ENCODE measurements at regions of chr14 and their contacts with region 1.

Region 1: GRCh38 chr14:90399541-90400444 is 3.0 kb downstream of the CALM1 start:
- DNase-seq: peak; percentile 91
- H3K4me3 Mint-ChIP-seq: peak overlapping the region; percentile 29
- H3K27ac Mint-ChIP-seq: no peak overlapping the region
- H3K4me1 Mint-ChIP-seq: peaks cover 10% of the 10 kb centered on the region
- H3K27me3 Mint-ChIP-seq: no peaks in the 10 kb centered on the region
- CTCF ChIP-seq: peak; percentile 99

Region 2: GRCh38 chr14:89954070-89955028 is 445.4 kb before region 1 on chr14 and contains the start of gene EFCAB11:
- CTCF ChIA-PET with region 1: no interaction called
- POLR2A ChIA-PET with region 1: no interaction called
- intact Hi-C with region 1: loop called (anchors 10 kb)
- DNase-seq: peak; percentile 99
- H3K4me3 Mint-ChIP-seq: peak within 1 kb of the TSS; percentile 88
- H3K27ac Mint-ChIP-seq: peak within 1 kb of the TSS; percentile 65
- H3K4me1 Mint-ChIP-seq: peaks cover 19% of the 10 kb centered on the region
- H3K27me3 Mint-ChIP-seq: no peaks in the 10 kb centered on the region
- CTCF ChIP-seq: peak; percentile 30
- total RNA-seq, gene EFCAB11: 10.6 and 11.1 TPM in 2 replicates

Region 3: GRCh38 chr14:90301668-90302090 is 98.1 kb before region 1 on chr14:
- CTCF ChIA-PET with region 1: interaction called, 5 read pairs
- POLR2A ChIA-PET with region 1: interaction called, 10 read pairs
- intact Hi-C with region 1: loop called (anchors 1 kb)
- DNase-seq: peak; percentile 41
- H3K4me3 Mint-ChIP-seq: no peak overlapping the region
- H3K27ac Mint-ChIP-seq: peak overlapping the region; percentile 63
- H3K4me1 Mint-ChIP-seq: no peaks in the 10 kb centered on the region
- H3K27me3 Mint-ChIP-seq: no peaks in the 10 kb centered on the region
- CTCF ChIP-seq: peak; percentile 23

Region 4: DNA sequence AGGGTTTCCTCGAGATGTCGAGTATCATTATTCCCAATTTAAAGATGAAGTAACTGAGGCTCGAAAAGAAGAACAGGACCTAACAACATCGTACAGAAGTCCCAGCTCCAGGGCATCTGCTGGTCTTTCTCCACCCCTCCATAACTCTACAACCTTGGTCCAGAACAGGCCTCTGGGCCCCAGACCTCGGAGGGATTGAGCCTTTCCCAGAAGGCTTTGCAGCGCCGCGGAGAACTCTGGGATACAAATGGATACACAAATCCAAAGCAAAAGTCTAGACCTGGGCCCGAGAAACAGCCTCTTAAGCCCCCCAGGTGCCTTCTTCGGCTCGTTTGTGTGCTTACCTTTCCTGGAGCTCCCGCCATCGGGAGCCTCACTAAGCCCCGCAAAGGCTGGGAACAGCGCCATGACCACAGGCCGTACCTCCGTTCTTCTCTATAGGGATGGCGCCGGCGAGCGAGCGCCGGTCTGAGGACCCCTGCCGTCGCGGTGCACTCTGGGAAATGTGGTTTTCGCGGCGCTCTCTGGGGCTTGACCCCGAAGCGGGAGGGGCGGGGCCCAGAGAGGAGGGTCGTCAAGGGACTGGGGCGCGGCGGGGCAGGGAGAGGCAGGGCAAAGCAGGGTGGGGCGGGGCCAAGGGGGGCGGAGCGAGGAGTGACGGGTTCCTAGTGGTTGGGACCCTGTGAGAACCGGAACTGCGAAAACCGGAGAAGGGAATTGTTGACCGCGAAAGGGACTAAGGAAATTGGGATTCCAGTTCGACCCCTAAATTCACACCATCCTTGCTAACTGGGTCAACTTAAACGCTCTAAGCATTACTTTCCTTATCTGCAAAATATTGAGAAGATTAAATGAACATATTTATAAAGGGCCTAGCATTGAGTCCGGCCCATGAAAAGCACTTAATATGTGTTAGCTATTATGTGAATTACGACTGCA is 68.0 kb before region 1 on chr14 and contains the start of gene NRDE2:
- CTCF ChIA-PET with region 1: interaction called, 5 read pairs
- POLR2A ChIA-PET with region 1: interaction called, 38 read pairs
- intact Hi-C with region 1: no loop called
- DNase-seq: peak; percentile 98
- H3K4me3 Mint-ChIP-seq: peak within 1 kb of the TSS; percentile 91
- H3K27ac Mint-ChIP-seq: peak within 1 kb of the TSS; percentile 91
- H3K4me1 Mint-ChIP-seq: peaks cover 10% of the 10 kb centered on the region
- H3K27me3 Mint-ChIP-seq: peaks cover 18% of the 10 kb centered on the region
- CTCF ChIP-seq: no peak
- total RNA-seq, gene NRDE2: 16.5 and 18.4 TPM in 2 replicates

Region 5: DNA sequence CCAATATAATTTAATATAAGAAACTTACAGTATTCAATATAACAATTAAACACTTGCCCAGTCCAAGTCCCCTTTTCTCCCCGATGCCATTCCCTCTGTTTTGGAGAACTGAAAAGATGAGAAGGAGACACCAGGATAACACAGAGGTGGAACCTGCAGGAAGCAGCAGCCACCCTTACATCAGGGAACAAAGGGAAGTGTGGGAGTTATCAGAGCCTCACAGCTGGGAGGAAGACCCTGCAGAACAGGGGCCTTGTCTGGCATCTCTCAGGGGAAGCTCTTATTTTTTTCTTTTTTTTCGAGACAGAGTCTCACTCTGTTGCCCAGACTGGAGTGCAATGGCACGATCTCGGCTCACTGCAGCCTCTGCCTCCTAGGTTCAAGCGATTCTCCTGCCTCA is 49.6 kb after region 1 on chr14:
- CTCF ChIA-PET with region 1: no interaction called
- POLR2A ChIA-PET with region 1: no interaction called
- intact Hi-C with region 1: no loop called
- DNase-seq: no peak
- H3K4me3 Mint-ChIP-seq: no peak overlapping the region
- H3K27ac Mint-ChIP-seq: no peak overlapping the region
- H3K4me1 Mint-ChIP-seq: peaks cover 5% of the 10 kb centered on the region
- H3K27me3 Mint-ChIP-seq: no peaks in the 10 kb centered on the region
- CTCF ChIP-seq: no peak

Region 6: GRCh38 chr14:90518941-90519256 is 119.1 kb after region 1 on chr14:
- CTCF ChIA-PET with region 1: interaction called, 4 read pairs
- POLR2A ChIA-PET with region 1: no interaction called
- intact Hi-C with region 1: loop called (anchors 1 kb)
- DNase-seq: peak; percentile 72
- H3K4me3 Mint-ChIP-seq: no peak overlapping the region
- H3K27ac Mint-ChIP-seq: no peak overlapping the region
- H3K4me1 Mint-ChIP-seq: peaks cover 10% of the 10 kb centered on the region
- H3K27me3 Mint-ChIP-seq: no peaks in the 10 kb centered on the region
- CTCF ChIP-seq: peak; percentile 33

Region 7: DNA sequence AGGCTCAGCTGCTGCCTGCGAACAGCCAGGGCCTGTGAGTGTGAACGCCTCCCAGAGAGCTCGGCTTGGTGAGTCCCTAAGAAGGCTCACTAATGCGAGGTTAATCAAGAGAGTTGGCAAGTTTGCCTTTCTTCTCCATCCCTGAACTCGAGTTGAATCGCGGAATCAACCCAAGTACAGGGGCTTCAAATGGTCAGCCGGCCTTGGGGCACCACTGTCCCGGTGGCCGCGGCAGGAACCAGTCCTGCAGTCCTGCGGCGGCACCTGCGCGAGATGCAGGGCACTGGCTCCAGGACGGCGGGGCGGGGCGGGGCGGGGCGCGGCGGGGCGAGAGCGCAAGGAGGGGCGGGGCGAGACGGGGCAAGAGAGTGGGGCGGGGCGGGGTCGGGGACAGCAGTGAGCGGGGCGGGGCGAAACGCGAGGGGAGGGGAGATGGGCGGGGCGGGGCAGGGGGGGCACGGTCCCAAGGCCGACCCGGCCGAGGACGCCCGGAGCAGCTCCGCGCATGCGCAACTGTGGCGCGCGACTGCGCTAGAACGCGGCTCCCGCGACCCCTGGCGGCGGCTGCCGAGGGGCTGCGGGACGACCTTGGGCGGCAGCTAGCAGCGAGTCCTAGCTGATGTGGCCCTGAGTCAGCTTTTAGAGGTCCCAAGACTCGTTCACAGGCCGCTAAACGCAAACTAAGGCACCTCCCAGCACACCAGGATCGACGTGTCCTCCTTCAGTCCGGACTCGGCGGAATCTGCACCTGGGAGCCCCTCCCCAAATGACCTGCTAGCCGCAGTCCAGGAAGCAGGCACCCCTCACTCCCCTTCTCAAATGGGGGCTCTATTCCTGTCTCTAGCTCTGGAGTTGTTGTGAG is 358.5 kb after region 1 on chr14:
- CTCF ChIA-PET with region 1: interaction called, 4 read pairs
- POLR2A ChIA-PET with region 1: interaction called, 7 read pairs
- intact Hi-C with region 1: loop called (anchors 2 kb)
- DNase-seq: peak; percentile 87
- H3K4me3 Mint-ChIP-seq: peak overlapping the region; percentile 72
- H3K27ac Mint-ChIP-seq: no peak overlapping the region
- H3K4me1 Mint-ChIP-seq: no peaks in the 10 kb centered on the region
- H3K27me3 Mint-ChIP-seq: no peaks in the 10 kb centered on the region
- CTCF ChIP-seq: peak; percentile 75

Region 8: GRCh38 chr14:90903101-90903500 is 503.3 kb after region 1 on chr14:
- CTCF ChIA-PET with region 1: interaction called, 3 read pairs
- POLR2A ChIA-PET with region 1: no interaction called
- intact Hi-C with region 1: loop called (anchors 2 kb)
- DNase-seq: peak; percentile 71
- H3K4me3 Mint-ChIP-seq: no peak overlapping the region
- H3K27ac Mint-ChIP-seq: no peak overlapping the region
- H3K4me1 Mint-ChIP-seq: no peaks in the 10 kb centered on the region
- H3K27me3 Mint-ChIP-seq: no peaks in the 10 kb centered on the region
- CTCF ChIP-seq: peak; percentile 81